Mammary epithelial cell (primary cell): ENCODE measurements at regions of chr4 and their contacts with region 1.

Region 1: DNA sequence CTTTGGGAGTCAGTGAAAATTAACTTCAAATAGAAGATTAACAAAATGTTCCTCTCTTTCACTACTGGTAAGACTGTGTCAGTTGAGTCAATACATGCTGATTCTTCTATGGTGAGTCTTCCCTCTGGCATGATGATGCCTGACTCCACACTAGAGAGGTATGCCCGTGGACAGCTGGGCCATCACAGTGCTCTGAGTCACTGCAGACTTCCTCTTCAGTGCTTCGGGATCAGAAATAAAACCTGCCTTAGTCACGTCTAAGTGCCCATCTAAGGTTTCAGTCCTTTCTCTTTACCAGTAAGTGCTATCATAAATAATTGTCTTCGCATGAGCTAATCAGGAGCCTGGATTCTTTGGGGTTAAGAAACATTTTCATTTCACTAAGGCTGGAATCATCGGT is 1.6 kb upstream of the ASB5 start:
- DNase-seq: peak; percentile 98
- H3K4me3 ChIP-seq: no peak overlapping the region
- H3K27ac ChIP-seq: peak overlapping the region; percentile 87
- H3K4me1 ChIP-seq: peaks cover 29% of the 10 kb centered on the region
- H3K27me3 ChIP-seq: no peaks in the 10 kb centered on the region
- CTCF ChIP-seq: no peak

Region 2: GRCh38 chr4:176185067-176185466 is 85.6 kb before region 1 on chr4:
- CTCF ChIA-PET with region 1: no interaction called
- dilution Hi-C with region 1: no loop called
- in situ Hi-C with region 1: no loop called
- intact Hi-C with region 1: loop called (anchors 2 kb)
- DNase-seq: peak; percentile 66
- H3K4me3 ChIP-seq: no peak overlapping the region
- H3K27ac ChIP-seq: no peak overlapping the region
- H3K4me1 ChIP-seq: peaks cover 3% of the 10 kb centered on the region
- H3K27me3 ChIP-seq: no peaks in the 10 kb centered on the region
- CTCF ChIP-seq: no peak

Region 3: GRCh38 chr4:176195184-176195978 is 75.3 kb before region 1 on chr4 and contains the start of gene SPATA4:
- CTCF ChIA-PET with region 1: no interaction called
- dilution Hi-C with region 1: loop called (anchors 5 kb)
- in situ Hi-C with region 1: no loop called
- intact Hi-C with region 1: loop called (anchors 1 kb)
- DNase-seq: peak; percentile 84
- H3K4me3 ChIP-seq: peak within 1 kb of the TSS; percentile 79 to 84 (median 83)
- H3K27ac ChIP-seq: peak within 1 kb of the TSS; percentile 98
- H3K4me1 ChIP-seq: peaks cover 31% of the 10 kb centered on the region
- H3K27me3 ChIP-seq: no peaks in the 10 kb centered on the region
- CTCF ChIP-seq: no peak
- total RNA-seq, gene SPATA4: 0.17 to 0.94 TPM